Dorsolateral prefrontal cortex (tissue), 120 donors: ENCODE measurements at regions of chr5 and their contacts with region 1.

Region 1: DNA sequence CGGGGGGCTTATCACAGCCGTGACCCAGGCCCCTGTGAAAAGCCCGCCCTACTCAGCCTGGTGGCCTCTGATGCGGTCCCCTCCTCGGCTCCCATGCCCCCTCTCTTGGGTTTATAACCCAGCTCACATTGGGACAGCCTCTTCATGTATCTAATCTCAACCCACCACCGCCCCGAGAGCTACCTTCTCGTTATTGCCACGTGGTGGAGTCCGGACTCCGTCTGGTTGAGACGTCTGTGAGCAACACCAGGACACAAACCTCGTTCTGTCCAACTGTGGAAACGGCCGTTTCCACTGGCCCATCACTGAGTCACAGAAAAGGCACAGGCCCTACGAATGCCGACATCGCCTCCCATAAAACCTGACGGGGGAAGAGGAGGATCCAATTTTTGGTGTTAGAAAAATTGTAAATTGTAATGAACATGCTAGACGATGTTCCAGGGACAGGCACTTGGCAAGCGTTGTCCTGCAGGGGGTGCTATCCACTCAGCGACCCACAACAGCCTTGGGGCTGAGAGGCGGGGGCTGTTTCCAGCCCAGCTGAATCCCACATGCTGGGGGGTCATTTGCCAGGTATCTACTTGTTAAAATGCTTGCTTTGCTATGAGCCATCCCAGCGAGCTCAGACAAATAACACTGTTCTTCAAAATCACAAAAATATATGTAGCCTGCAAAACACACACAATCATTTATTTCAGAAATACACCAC is 37.3 kb upstream of the N4BP3 start:
- DNase-seq: peak in 9 of 10 donors; percentile 46 to 70 (median 65)
- H3K4me3 ChIP-seq: peak overlapping the region in 4 of 59 donors; percentile 10 to 23 (median 18)
- H3K27ac ChIP-seq: no peak overlapping the region
- H3K27me3 ChIP-seq: peaks cover 0 to 20% (median 0%) of the 10 kb centered on the region in 45 donors
- CTCF ChIP-seq: peak; percentile 56 to 93 (median 82)

Region 2: DNA sequence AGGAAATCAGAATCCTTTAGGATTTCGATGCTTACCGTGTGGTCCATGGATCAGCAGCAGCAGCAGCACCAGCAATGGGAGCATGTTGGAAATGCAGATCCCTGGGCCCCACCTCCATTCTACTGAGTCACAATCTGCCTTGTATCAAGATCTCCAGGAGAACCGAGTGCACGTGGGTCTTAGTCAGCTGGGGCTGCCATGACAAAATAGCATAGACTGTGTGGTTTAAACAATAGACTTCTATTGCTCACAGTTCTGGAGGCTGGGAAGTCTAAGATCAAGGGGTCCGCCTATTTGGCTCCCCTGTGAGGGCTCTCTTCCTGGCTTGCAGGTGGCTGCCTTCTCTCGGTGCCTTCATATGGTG is 78.7 kb before region 1 on chr5:
- intact Hi-C with region 1: no loop called
- DNase-seq: no peak
- H3K4me3 ChIP-seq: no peak overlapping the region
- H3K27ac ChIP-seq: no peak overlapping the region
- H3K27me3 ChIP-seq: peaks cover 0 to 35% (median 0%) of the 10 kb centered on the region in 45 donors
- CTCF ChIP-seq: no peak

Region 3: GRCh38 chr5:178163772-178164735 is 88.1 kb after region 1 on chr5:
- intact Hi-C with region 1: loop called (anchors 2 to 10 kb)
- DNase-seq: peak; percentile 69 to 91 (median 79)
- H3K4me3 ChIP-seq: peak overlapping the region in 56 of 59 donors; percentile 10 to 65 (median 40)
- H3K27ac ChIP-seq: peak overlapping the region in 1 of 59 donors; percentile 28
- H3K27me3 ChIP-seq: peaks cover 0 to 19% (median 5%) of the 10 kb centered on the region in 45 donors
- CTCF ChIP-seq: peak; percentile 87 to 99 (median 98)